ENCODE measurements at regions of chr15 and their contacts with region 1.

Region 1: GRCh38 chr15:52010633-52011595 is 8.1 kb upstream of the MAPK6 start:
- DNase-seq: peak; percentile 77
- H3K4me3 ChIP-seq: no peak overlapping the region
- H3K27ac ChIP-seq: peak overlapping the region in 3 of 4 donors; percentile 66 to 79 (median 72)
- H3K4me1 ChIP-seq: peaks cover 0 to 21% (median 19%) of the 10 kb centered on the region in 4 donors
- H3K27me3 ChIP-seq: no peaks in the 10 kb centered on the region
- CTCF ChIP-seq: no peak
- EP300 ChIP-seq: no peak
- POLR2A ChIP-seq: no peak

Region 2: GRCh38 chr15:52039925-52040781 is 29.2 kb after region 1 on chr15:
- intact Hi-C with region 1: loop called (anchors 5 kb)
- DNase-seq: no peak
- H3K4me3 ChIP-seq: no peak overlapping the region
- H3K27ac ChIP-seq: peak overlapping the region in 2 of 4 donors; percentile 20 to 49
- H3K4me1 ChIP-seq: peaks cover 0 to 55% (median 23%) of the 10 kb centered on the region in 4 donors
- H3K27me3 ChIP-seq: no peaks in the 10 kb centered on the region
- CTCF ChIP-seq: no peak
- EP300 ChIP-seq: no peak
- POLR2A ChIP-seq: no peak

Region 3: GRCh38 chr15:52057996-52058395 is 47.1 kb after region 1 on chr15:
- intact Hi-C with region 1: no loop called
- DNase-seq: no peak
- H3K4me3 ChIP-seq: no peak overlapping the region
- H3K27ac ChIP-seq: no peak overlapping the region
- H3K4me1 ChIP-seq: no peaks in the 10 kb centered on the region
- H3K27me3 ChIP-seq: no peaks in the 10 kb centered on the region
- CTCF ChIP-seq: no peak
- EP300 ChIP-seq: no peak
- POLR2A ChIP-seq: no peak

Region 4: DNA sequence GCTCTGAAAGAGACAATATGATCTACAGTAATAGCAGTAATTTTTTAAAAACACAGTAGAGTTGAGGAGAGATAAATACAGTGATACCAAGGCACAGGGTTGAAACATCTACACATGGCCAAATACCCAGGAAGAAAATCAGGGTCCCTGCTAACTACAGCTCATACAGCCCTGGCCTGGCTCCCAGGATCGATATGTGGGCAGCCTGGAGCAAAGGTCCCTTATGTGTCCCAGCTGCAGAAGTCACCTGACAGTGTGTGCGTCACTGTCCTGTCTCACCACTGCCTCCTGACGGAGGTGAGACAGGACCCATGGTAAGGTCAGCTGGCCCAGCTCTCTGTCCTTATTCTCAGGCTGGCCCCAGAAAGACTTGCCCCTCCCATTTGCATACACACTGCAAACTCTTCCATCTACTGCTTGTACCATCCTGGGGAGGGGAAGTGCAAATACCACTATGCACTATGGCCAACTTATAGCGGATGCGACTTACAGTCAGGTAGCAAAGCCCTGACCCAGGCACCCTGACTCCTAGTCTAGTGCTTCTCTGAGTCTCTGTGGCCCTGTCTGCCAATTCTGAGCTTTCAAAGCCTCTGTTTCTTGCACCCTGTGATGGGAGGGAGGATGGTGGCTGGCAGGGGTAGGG is 123.7 kb after region 1 on chr15:
- intact Hi-C with region 1: no loop called
- DNase-seq: no peak
- H3K4me3 ChIP-seq: no peak overlapping the region
- H3K27ac ChIP-seq: no peak overlapping the region
- H3K4me1 ChIP-seq: peaks cover 0 to 23% (median 18%) of the 10 kb centered on the region in 4 donors
- H3K27me3 ChIP-seq: no peaks in the 10 kb centered on the region
- CTCF ChIP-seq: no peak
- EP300 ChIP-seq: no peak
- POLR2A ChIP-seq: no peak

Region 5: DNA sequence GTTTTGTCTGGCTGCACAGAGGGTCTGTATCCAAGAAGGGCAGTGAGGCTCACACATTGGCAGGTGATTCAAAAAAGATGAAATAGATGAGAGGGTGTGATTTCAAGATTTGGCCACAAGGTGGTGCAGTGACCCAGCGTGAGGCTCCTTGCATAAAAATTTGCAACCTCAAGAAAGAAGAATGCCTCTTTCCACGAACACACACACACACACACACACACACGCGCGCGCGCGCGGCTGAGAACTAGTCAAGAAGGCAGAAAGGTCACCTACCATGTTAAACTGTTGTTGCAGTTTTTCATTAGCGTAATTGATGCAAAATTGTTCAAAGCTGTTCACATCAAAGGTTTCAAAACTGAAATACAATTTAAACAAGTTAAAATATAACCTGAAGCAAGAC is 245.5 kb after region 1 on chr15:
- intact Hi-C with region 1: no loop called
- DNase-seq: peak; percentile 82
- H3K4me3 ChIP-seq: no peak overlapping the region
- H3K27ac ChIP-seq: no peak overlapping the region
- H3K4me1 ChIP-seq: peaks cover 0 to 2% (median 1%) of the 10 kb centered on the region in 4 donors
- H3K27me3 ChIP-seq: no peaks in the 10 kb centered on the region
- CTCF ChIP-seq: peak; percentile 26 to 85 (median 74)
- EP300 ChIP-seq: no peak
- POLR2A ChIP-seq: no peak